Mammary epithelial cell (primary cell): ENCODE measurements at regions of chr10 and their contacts with region 1.

Region 1: DNA sequence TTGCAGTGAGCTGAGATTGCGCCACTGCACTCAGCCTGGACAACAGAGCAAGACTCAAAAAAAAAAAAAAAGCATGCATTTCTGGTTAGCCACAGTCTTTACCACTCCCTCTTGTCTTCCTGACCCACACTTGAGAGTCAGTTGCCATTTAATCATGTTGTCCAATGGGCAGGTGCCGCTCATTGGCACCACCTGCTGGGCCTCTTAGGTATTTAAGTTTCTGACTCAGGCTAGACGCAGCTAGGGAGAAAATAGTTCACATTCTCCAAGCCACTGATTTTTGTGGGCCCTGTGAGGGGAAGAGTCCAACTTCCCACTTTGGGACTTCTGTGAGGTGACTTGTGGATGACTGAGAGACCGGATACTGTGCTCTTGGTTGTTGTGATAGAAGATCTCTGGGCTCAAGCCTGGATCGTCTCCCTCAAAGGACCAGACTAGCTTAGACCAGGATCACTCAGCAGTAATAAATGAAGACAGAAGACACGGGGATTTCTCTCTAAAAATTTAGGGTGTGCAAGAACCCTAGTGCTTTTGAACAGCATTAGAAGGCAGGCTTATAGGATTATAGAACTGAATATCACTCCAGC is 26.8 kb upstream of the SORCS3 start:
- DNase-seq: peak; percentile 23
- H3K4me3 ChIP-seq: no peak overlapping the region
- H3K27ac ChIP-seq: no peak overlapping the region
- H3K4me1 ChIP-seq: no peaks in the 10 kb centered on the region
- H3K27me3 ChIP-seq: no peaks in the 10 kb centered on the region
- CTCF ChIP-seq: peak; percentile 70

Region 2: DNA sequence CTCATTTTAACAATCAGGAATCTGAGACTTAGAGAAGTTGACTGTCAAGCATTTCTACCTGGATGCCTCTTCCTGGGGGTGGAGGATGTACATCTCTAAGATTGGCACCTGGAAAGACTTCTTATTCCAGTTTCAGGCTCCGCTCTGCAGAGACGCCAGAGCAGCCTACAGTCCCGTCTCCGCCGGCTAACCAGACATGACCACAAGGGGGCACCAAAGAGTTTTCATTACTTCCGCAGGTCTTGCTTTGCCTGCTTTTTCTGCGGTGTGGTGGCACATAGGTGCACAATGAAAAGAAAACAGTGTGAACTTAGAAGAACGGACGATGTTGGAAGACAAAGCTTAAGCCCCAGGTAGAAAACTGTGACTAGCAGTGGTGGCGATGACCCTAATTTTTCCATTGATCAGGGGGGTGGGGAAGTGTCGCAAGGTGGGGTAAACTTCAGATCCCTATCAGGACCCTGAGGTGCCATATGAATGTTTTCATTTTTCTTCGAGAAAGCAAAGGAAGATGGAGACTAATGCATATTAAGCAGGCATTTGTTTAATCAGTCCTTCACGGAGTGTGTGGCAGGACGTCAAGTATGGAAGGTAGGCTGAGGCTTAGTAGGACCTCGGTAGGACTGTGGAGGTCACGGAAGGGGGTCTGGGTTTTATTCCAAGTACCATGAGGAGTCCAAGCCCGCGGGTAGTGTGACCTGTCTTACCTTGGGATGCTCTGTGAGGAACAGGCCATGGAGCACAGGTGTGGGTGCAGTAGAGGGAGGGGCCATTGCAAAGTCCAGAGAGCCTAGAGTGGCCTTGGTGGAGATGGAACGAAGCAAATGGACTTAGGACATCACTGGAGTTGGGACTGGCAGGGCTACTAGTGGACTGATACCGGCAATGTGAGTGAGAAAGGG is 33.3 kb before region 1 on chr10:
- CTCF ChIA-PET with region 1: no interaction called
- dilution Hi-C with region 1: no loop called
- in situ Hi-C with region 1: no loop called
- intact Hi-C with region 1: loop called (anchors 1 kb)
- DNase-seq: peak; percentile 57
- H3K4me3 ChIP-seq: no peak overlapping the region
- H3K27ac ChIP-seq: no peak overlapping the region
- H3K4me1 ChIP-seq: peaks cover 20% of the 10 kb centered on the region
- H3K27me3 ChIP-seq: no peaks in the 10 kb centered on the region
- CTCF ChIP-seq: peak; percentile 85 to 89

Region 3: DNA sequence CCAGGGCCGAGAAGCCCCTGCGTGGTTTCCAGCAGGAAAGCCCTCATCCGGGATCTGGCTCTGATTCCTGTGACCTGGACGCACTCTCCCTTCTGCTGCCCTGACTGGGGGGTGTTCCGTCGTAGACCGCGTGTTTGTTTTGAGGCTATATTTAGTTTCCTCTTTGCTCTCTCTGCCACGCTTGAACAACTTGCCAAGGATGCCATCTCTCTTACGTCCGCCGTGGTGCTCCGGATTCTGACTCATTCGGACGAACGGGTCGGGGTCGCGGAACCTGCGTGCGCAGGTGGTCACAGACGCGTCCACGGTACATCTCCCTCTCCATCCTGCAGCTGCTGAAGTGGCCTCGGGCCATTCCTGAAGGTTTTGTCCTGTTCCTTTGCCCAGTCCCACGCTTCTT is 16.4 kb after region 1 on chr10:
- CTCF ChIA-PET with region 1: interaction called, 11 read pairs
- dilution Hi-C with region 1: no loop called
- in situ Hi-C with region 1: no loop called
- intact Hi-C with region 1: no loop called
- DNase-seq: no peak
- H3K4me3 ChIP-seq: no peak overlapping the region
- H3K27ac ChIP-seq: no peak overlapping the region
- H3K4me1 ChIP-seq: no peaks in the 10 kb centered on the region
- H3K27me3 ChIP-seq: peaks cover 8% of the 10 kb centered on the region
- CTCF ChIP-seq: no peak

Region 4: GRCh38 chr10:104762793-104763192 is 148.5 kb after region 1 on chr10:
- CTCF ChIA-PET with region 1: no interaction called
- dilution Hi-C with region 1: no loop called
- in situ Hi-C with region 1: no loop called
- intact Hi-C with region 1: no loop called
- DNase-seq: no peak
- H3K4me3 ChIP-seq: no peak overlapping the region
- H3K27ac ChIP-seq: no peak overlapping the region
- H3K4me1 ChIP-seq: peaks cover 4% of the 10 kb centered on the region
- H3K27me3 ChIP-seq: no peaks in the 10 kb centered on the region
- CTCF ChIP-seq: no peak